Esophagus muscularis mucosa (tissue), 4 donors: ENCODE measurements at regions of chr3 and their contacts with region 1.

Region 1: DNA sequence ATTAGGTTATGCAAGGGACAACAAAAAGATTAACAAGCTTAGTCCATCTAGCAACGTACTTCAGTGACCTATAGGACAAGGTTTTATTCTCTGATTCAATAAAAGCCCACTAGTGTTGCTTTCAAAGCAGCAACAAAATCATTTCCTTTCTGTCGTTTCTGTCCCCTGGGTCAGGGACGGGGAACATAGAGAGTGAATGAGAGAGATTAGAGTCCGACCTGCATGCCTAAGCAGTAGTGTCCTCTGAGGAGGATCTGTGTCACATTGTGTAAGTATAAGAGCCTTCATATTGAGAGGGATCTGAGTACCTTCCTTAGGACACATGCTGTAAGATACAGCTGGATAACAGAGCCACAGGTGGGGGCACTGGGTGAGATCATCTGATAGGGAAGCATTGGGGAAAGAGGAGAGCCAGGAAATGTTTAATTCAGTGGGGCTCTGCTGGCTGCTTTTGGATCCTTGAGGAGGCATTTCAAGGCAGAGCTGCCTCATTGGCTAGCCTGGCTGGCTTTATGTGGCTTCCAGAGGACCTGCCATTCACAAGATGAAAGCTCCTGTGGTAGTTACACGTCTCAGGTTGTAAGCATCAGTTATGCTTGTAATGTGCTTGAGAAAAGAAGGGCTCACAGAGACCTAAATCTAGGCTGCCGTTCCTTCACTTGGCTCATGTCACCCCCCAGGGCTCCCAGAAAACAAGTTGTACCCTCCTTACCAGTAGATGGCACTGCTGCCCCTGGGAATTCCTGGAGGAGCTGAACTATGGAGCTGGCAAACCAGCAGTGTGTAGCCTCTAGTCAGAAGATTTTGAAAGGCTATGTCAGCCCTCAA is 2.7 kb downstream of the TMEM108 start:
- DNase-seq: no peak
- H3K4me3 ChIP-seq: peak overlapping the region in 3 of 4 donors; percentile 27 to 32 (median 28)
- H3K27ac ChIP-seq: peak overlapping the region; percentile 63 to 83 (median 68)
- H3K4me1 ChIP-seq: peaks cover 13 to 59% (median 56%) of the 10 kb centered on the region in 4 donors
- H3K27me3 ChIP-seq: peaks cover 0 to 16% (median 2%) of the 10 kb centered on the region in 4 donors
- CTCF ChIP-seq: peak; percentile 78 to 80 (median 80)
- EP300 ChIP-seq: no peak
- POLR2A ChIP-seq: no peak

Region 2: GRCh38 chr3:133169331-133170068 is 128.6 kb after region 1 on chr3:
- intact Hi-C with region 1: no loop called
- DNase-seq: no peak
- H3K4me3 ChIP-seq: no peak overlapping the region
- H3K27ac ChIP-seq: no peak overlapping the region
- H3K4me1 ChIP-seq: no peaks in the 10 kb centered on the region
- H3K27me3 ChIP-seq: no peaks in the 10 kb centered on the region
- CTCF ChIP-seq: no peak
- EP300 ChIP-seq: no peak
- POLR2A ChIP-seq: no peak

Region 3: DNA sequence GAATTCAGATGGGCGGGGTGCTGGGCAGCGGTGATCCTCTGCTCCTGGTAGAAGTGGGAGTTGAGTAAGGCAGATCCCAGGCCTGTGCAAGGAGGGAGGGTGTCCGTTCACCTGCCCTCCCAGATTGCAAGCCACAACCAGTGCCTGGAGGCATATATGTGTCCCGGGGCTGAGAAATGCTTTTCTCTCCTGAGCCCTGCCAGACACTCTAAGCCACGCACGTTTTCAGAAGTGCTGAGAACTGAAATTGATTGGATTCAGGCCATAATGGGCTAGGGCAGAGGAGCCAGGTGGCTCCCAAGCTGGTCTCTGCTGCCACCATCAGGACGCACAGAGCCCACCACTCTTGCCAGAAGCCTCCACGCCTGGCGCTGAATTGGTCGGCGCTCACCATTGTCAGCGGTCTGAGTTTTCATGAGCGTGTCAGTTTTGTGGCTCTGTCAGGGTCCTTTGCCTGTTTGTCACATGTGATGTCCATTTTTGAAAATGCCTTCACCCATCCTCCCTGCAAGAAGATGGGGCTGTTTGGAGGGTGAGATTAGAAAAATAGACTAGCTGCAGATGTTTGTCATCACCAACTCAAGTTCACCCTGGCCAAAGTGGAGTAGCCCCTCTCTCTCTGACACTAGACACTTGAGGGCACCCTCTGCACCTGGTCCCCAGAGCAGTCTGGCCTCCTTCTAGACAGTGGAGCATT is 343.6 kb after region 1 on chr3:
- intact Hi-C with region 1: loop called (anchors 2 kb)
- DNase-seq: no peak
- H3K4me3 ChIP-seq: no peak overlapping the region
- H3K27ac ChIP-seq: no peak overlapping the region
- H3K4me1 ChIP-seq: peaks cover 0 to 23% (median 14%) of the 10 kb centered on the region in 4 donors
- H3K27me3 ChIP-seq: no peaks in the 10 kb centered on the region
- CTCF ChIP-seq: peak; percentile 83 to 85 (median 84)
- EP300 ChIP-seq: no peak
- POLR2A ChIP-seq: no peak

Region 4: GRCh38 chr3:133426721-133427120 is 385.8 kb after region 1 on chr3:
- intact Hi-C with region 1: loop called (anchors 2 kb)
- DNase-seq: no peak
- H3K4me3 ChIP-seq: no peak overlapping the region
- H3K27ac ChIP-seq: no peak overlapping the region
- H3K4me1 ChIP-seq: peaks cover 0 to 9% (median 8%) of the 10 kb centered on the region in 4 donors
- H3K27me3 ChIP-seq: peaks cover 0 to 10% (median 0%) of the 10 kb centered on the region in 4 donors
- CTCF ChIP-seq: no peak
- EP300 ChIP-seq: no peak
- POLR2A ChIP-seq: no peak